IMR-90 (cell line): ENCODE measurements at regions of chr9 and their contacts with region 1.

Region 1: GRCh38 chr9:16871356-16872151 is 1.1 kb upstream of the BNC2 start:
- DNase-seq: peak; percentile 88
- ATAC-seq: peak; percentile 50
- H3K4me3 ChIP-seq: peak overlapping the region; percentile 89
- H3K27ac ChIP-seq: peak overlapping the region; percentile 90
- H3K4me1 ChIP-seq: peaks cover 5% of the 10 kb centered on the region; the same call in 1 of the 2 replicates
- H3K27me3 ChIP-seq: no peaks in the 10 kb centered on the region
- CTCF ChIP-seq: no peak
- POLR2A ChIP-seq: peak; percentile 18; the same call in 1 of the 2 replicates
- RAD21 ChIP-seq: peak; percentile 1; the same call in 1 of the 2 replicates

Region 2: GRCh38 chr9:15873569-15874177 is 997.9 kb before region 1 on chr9:
- CTCF ChIA-PET with region 1: no interaction called
- POLR2A ChIA-PET with region 1: no interaction called
- dilution Hi-C with region 1: no loop called
- in situ Hi-C with region 1: no loop called
- intact Hi-C with region 1: loop called (anchors 5 kb)
- DNase-seq: peak; percentile 74
- ATAC-seq: peak; percentile 70; the same call in 1 of the 2 replicates
- H3K4me3 ChIP-seq: no peak overlapping the region
- H3K27ac ChIP-seq: no peak overlapping the region
- H3K4me1 ChIP-seq: no peaks in the 10 kb centered on the region; the same call in 1 of the 2 replicates
- H3K27me3 ChIP-seq: no peaks in the 10 kb centered on the region
- CTCF ChIP-seq: peak; percentile 82
- POLR2A ChIP-seq: no peak
- RAD21 ChIP-seq: peak; percentile 87

Region 3: DNA sequence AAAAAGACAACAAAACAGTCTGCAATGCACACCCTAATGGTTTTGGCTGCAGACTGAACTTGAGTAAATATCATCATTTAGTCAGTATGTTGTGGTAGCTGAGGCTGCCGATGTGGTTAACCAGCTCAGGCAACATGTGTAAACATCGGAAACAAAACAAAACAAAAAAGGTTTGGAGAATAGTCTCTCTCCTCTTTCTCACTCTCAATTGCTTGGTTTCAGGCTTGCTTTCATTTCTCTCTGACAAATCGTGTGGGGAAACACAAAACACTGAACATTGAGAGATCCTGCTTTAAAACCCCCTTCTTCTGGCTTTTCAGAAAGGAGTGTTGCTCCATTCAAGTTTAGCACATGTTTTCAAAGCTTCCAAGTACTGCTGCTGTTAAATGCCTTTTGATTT is 454.4 kb before region 1 on chr9:
- CTCF ChIA-PET with region 1: no interaction called
- POLR2A ChIA-PET with region 1: no interaction called
- dilution Hi-C with region 1: no loop called
- in situ Hi-C with region 1: no loop called
- intact Hi-C with region 1: loop called (anchors 2 kb)
- DNase-seq: peak; percentile 96
- ATAC-seq: peak; percentile 70
- H3K4me3 ChIP-seq: peak overlapping the region; percentile 20; the same call in 1 of the 2 replicates
- H3K27ac ChIP-seq: peak overlapping the region; percentile 54; the same call in 1 of the 2 replicates
- H3K4me1 ChIP-seq: peaks cover 14% of the 10 kb centered on the region
- H3K27me3 ChIP-seq: no peaks in the 10 kb centered on the region; the same call in 1 of the 2 replicates
- CTCF ChIP-seq: no peak
- POLR2A ChIP-seq: no peak
- RAD21 ChIP-seq: peak; percentile 30

Region 4: GRCh38 chr9:16653491-16654399 is 217.8 kb before region 1 on chr9:
- CTCF ChIA-PET with region 1: no interaction called
- POLR2A ChIA-PET with region 1: no interaction called
- dilution Hi-C with region 1: no loop called
- in situ Hi-C with region 1: no loop called
- intact Hi-C with region 1: loop called (anchors 5 kb)
- DNase-seq: no peak
- ATAC-seq: peak; percentile 43
- H3K4me3 ChIP-seq: peak overlapping the region; percentile 45
- H3K27ac ChIP-seq: peak overlapping the region; percentile 49
- H3K4me1 ChIP-seq: peaks cover 16% of the 10 kb centered on the region; the same call in 1 of the 2 replicates
- H3K27me3 ChIP-seq: no peaks in the 10 kb centered on the region
- CTCF ChIP-seq: no peak
- POLR2A ChIP-seq: no peak
- RAD21 ChIP-seq: no peak

Region 5: GRCh38 chr9:16796304-16796825 is 75.2 kb before region 1 on chr9:
- CTCF ChIA-PET with region 1: no interaction called
- POLR2A ChIA-PET with region 1: no interaction called
- dilution Hi-C with region 1: no loop called
- in situ Hi-C with region 1: no loop called
- intact Hi-C with region 1: loop called (anchors 2 kb)
- DNase-seq: no peak
- ATAC-seq: no peak
- H3K4me3 ChIP-seq: no peak overlapping the region
- H3K27ac ChIP-seq: no peak overlapping the region
- H3K4me1 ChIP-seq: peaks cover 14% of the 10 kb centered on the region
- H3K27me3 ChIP-seq: no peaks in the 10 kb centered on the region
- CTCF ChIP-seq: no peak
- POLR2A ChIP-seq: no peak
- RAD21 ChIP-seq: no peak

Region 6: GRCh38 chr9:16985559-16986348 is 114.2 kb after region 1 on chr9:
- CTCF ChIA-PET with region 1: no interaction called
- POLR2A ChIA-PET with region 1: interaction called, 3 read pairs
- dilution Hi-C with region 1: no loop called
- in situ Hi-C with region 1: no loop called
- intact Hi-C with region 1: loop called (anchors 5 kb)
- DNase-seq: peak; percentile 93
- ATAC-seq: peak; percentile 79
- H3K4me3 ChIP-seq: peak overlapping the region; percentile 0; the same call in 1 of the 2 replicates
- H3K27ac ChIP-seq: peak overlapping the region; percentile 88
- H3K4me1 ChIP-seq: peaks cover 16% of the 10 kb centered on the region
- H3K27me3 ChIP-seq: no peaks in the 10 kb centered on the region
- CTCF ChIP-seq: no peak
- POLR2A ChIP-seq: peak; percentile 66; the same call in 1 of the 2 replicates
- RAD21 ChIP-seq: no peak; the same call in 1 of the 2 replicates

Region 7: GRCh38 chr9:17116400-17116837 is 244.9 kb after region 1 on chr9:
- CTCF ChIA-PET with region 1: no interaction called
- POLR2A ChIA-PET with region 1: no interaction called
- dilution Hi-C with region 1: no loop called
- in situ Hi-C with region 1: no loop called
- intact Hi-C with region 1: loop called (anchors 10 kb)
- DNase-seq: peak; percentile 54
- ATAC-seq: peak; percentile 77
- H3K4me3 ChIP-seq: no peak overlapping the region
- H3K27ac ChIP-seq: no peak overlapping the region
- H3K4me1 ChIP-seq: no peaks in the 10 kb centered on the region
- H3K27me3 ChIP-seq: no peaks in the 10 kb centered on the region
- CTCF ChIP-seq: peak; percentile 50
- POLR2A ChIP-seq: no peak
- RAD21 ChIP-seq: peak; percentile 39